ENCODE measurements at regions of chr3 and their contacts with region 1.

Region 1: DNA sequence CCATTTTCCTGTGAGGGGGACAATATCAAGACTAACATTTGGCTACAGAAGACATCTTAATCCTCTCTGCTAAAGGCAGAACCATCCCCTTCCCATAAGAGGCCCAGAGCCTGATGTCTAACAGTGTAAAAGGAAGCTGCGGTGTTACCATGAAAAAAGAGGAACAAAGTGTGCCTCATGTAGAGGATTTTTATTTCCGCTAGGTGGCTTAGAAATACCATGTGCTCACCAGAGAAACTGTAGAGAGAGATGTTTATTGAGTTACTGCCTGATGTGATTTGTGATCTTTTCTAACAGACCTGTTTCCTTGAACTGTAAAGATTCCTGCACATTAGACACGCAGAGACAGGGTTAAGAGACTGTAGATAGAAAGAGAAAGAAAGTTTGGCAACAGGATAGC is 22.0 kb downstream of the OR5H15 start:
- DNase-seq: peak; percentile 7
- ATAC-seq: peak; percentile 80
- H3K4me3 ChIP-seq: no peak overlapping the region
- H3K27ac ChIP-seq: no peak overlapping the region
- H3K4me1 ChIP-seq: no peaks in the 10 kb centered on the region
- H3K27me3 ChIP-seq: no peaks in the 10 kb centered on the region
- CTCF ChIP-seq: peak; percentile 5 to 41 (median 40); a peak in 4 of 6 replicates
- POLR2A ChIP-seq: no peak
- RAD21 ChIP-seq: peak; percentile 28; the same call in 1 of the 2 replicates

Region 2: DNA sequence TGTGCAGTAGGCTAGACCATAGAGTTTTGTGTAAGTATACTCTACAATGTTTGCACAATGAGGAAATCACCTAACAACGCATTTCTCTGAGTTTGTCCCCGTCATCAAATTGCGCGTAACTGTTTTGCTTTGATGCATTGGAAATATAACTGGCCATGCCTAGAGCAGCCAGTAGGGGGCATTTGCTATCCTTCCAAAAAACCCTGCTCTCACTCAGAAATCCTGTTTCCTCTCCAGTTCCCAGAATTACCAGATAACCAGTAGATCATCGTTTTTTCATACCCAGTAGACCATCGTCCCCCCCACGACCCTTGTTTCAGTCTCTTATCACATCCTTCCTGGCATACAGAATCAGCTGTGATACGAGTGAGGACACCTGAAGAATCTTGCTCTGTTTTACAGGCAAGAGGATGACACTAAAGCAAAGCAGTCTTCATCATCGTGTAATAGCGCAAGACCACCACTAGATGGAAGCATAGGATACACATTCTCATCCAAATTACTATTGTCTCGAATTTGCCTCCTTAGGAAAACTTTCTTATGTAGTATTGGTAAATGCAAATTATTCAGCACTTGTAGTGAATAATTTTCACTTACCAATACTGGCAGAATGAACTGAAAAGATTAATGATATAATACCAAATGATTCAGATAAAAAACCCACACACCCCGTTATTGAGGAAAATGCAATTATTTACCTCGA is 149.1 kb before region 1 on chr3:
- CTCF ChIA-PET with region 1: interaction called, 18 read pairs
- POLR2A ChIA-PET with region 1: no interaction called
- RAD21 ChIA-PET with region 1: interaction called in 1 of 2 experiments, 5 read pairs
- intact Hi-C with region 1: loop called (anchors 1 kb)
- DNase-seq: peak; percentile 89
- ATAC-seq: peak; percentile 91
- H3K4me3 ChIP-seq: peak overlapping the region; percentile 26 to 49
- H3K27ac ChIP-seq: no peak overlapping the region
- H3K4me1 ChIP-seq: peaks cover 0 to 8% of the 10 kb centered on the region in 2 experiments; a peak in 2 of 4 replicates
- H3K27me3 ChIP-seq: no peaks in the 10 kb centered on the region
- CTCF ChIP-seq: peak; percentile 77 to 97 (median 92)
- POLR2A ChIP-seq: no peak
- RAD21 ChIP-seq: peak; percentile 81

Region 3: GRCh38 chr3:98140531-98140930 is 48.0 kb before region 1 on chr3:
- CTCF ChIA-PET with region 1: no interaction called
- POLR2A ChIA-PET with region 1: no interaction called
- RAD21 ChIA-PET with region 1: no interaction called
- intact Hi-C with region 1: loop called (anchors 1 kb)
- DNase-seq: no peak
- ATAC-seq: no peak
- H3K4me3 ChIP-seq: no peak overlapping the region
- H3K27ac ChIP-seq: no peak overlapping the region
- H3K4me1 ChIP-seq: no peaks in the 10 kb centered on the region
- H3K27me3 ChIP-seq: no peaks in the 10 kb centered on the region; the same call in 1 of the 2 replicates
- CTCF ChIP-seq: no peak
- POLR2A ChIP-seq: no peak
- RAD21 ChIP-seq: no peak